Activated CD4-positive, alpha-beta T cell treated with anti-CD3 and anti-CD28 coated beads for 36 hours (primary cell): ENCODE measurements at regions of chr22 and their contacts with region 1.

Region 1: GRCh38 chr22:39332441-39333064 is 13.1 kb upstream of the RPL3 start:
- DNase-seq: no peak
- ATAC-seq: peak; percentile 74
- H3K4me3 Mint-ChIP-seq: no peak overlapping the region
- H3K27ac Mint-ChIP-seq: peak overlapping the region; percentile 3
- H3K4me1 Mint-ChIP-seq: peaks cover 15% of the 10 kb centered on the region
- H3K27me3 Mint-ChIP-seq: no peaks in the 10 kb centered on the region

Region 2: GRCh38 chr22:39343259-39344048 is 10.9 kb after region 1 on chr22:
- CTCF ChIA-PET with region 1: interaction called, 16 read pairs
- POLR2A ChIA-PET with region 1: no interaction called
- intact Hi-C with region 1: no loop called
- DNase-seq: peak; percentile 71
- ATAC-seq: peak; percentile 87
- H3K4me3 Mint-ChIP-seq: no peak overlapping the region
- H3K27ac Mint-ChIP-seq: no peak overlapping the region
- H3K4me1 Mint-ChIP-seq: peaks cover 4% of the 10 kb centered on the region
- H3K27me3 Mint-ChIP-seq: peaks cover 2% of the 10 kb centered on the region

Region 3: DNA sequence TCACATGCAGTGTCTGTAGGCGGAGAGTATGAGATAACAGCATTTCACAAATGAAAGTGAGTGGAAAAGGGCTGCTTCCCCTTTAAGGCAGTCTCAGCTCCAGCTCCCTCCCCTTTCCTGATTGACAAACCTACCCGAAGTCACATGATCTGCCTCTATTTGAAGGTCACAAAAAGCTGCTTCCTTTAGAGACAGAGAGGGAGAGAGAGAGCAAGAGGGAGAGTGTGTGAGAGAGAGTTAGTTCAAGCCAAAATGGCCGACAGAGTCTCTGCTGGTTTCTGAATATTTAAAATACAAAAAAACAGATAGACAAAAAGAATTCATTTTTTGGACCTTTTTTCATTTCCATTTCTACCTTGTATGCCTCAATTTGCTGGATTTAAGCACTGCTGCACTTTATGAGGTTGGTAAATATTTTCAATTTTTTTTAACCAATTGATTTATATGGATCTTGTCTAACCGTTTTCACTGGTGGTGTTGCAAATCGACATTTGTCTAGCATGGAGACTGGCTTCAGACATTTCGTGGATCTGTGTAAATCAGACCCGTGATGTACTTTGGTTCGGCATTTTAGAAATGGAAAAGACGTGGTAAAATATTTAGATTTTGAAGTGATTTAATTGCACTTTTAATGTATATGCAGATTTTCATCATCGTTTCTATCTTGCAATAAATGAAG is 845.3 kb after region 1 on chr22 and contains the start of gene TNRC6B:
- CTCF ChIA-PET with region 1: no interaction called
- POLR2A ChIA-PET with region 1: no interaction called
- intact Hi-C with region 1: no loop called
- DNase-seq: peak; percentile 82
- ATAC-seq: peak; percentile 77
- H3K4me3 Mint-ChIP-seq: peak within 1 kb of the TSS; percentile 89
- H3K27ac Mint-ChIP-seq: peak within 1 kb of the TSS; percentile 92
- H3K4me1 Mint-ChIP-seq: peaks cover 57% of the 10 kb centered on the region
- H3K27me3 Mint-ChIP-seq: no peaks in the 10 kb centered on the region
- total RNA-seq, gene TNRC6B: 37.3 to 40.3 TPM